ENCODE measurements at regions of chr12 and their contacts with region 1.

Region 1: GRCh38 chr12:72560003-72560769 is 288.0 kb downstream of the TRHDE start:
- DNase-seq: no peak
- H3K4me3 Mint-ChIP-seq: no peak overlapping the region
- H3K27ac Mint-ChIP-seq: no peak overlapping the region
- H3K4me1 Mint-ChIP-seq: no peaks in the 10 kb centered on the region
- H3K27me3 Mint-ChIP-seq: no peaks in the 10 kb centered on the region

Region 2: GRCh38 chr12:72777806-72778205 is 217.6 kb after region 1 on chr12:
- CTCF ChIA-PET with region 1: no interaction called
- intact Hi-C with region 1: no loop called
- DNase-seq: no peak
- H3K4me3 Mint-ChIP-seq: no peak overlapping the region
- H3K27ac Mint-ChIP-seq: no peak overlapping the region
- H3K4me1 Mint-ChIP-seq: no peaks in the 10 kb centered on the region
- H3K27me3 Mint-ChIP-seq: no peaks in the 10 kb centered on the region

Region 3: DNA sequence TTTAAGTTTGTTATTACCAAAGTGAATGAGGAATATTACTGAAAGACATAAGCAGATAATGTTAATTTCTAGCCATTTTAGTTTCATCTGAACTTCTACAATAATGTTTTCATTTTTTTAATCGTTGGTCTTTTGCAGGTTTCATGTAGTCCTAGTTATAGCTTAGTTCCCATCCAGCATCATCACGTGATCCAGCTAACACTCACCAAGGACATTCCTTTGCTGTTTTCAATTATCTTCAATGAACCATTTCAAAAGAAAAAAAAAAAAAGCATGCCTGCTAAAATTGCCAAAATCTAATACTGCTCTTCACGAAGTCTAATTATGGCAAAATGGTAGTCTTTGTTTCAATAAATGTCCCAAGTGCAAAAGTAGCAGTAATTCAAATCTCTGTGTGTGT is 1789.7 kb after region 1 on chr12:
- CTCF ChIA-PET with region 1: no interaction called
- intact Hi-C with region 1: loop called (anchors 10 kb)
- DNase-seq: no peak
- H3K4me3 Mint-ChIP-seq: no peak overlapping the region
- H3K27ac Mint-ChIP-seq: no peak overlapping the region
- H3K4me1 Mint-ChIP-seq: no peaks in the 10 kb centered on the region
- H3K27me3 Mint-ChIP-seq: no peaks in the 10 kb centered on the region